IMR-90 (cell line): ENCODE measurements at regions of chr17 and their contacts with region 1.

Region 1: DNA sequence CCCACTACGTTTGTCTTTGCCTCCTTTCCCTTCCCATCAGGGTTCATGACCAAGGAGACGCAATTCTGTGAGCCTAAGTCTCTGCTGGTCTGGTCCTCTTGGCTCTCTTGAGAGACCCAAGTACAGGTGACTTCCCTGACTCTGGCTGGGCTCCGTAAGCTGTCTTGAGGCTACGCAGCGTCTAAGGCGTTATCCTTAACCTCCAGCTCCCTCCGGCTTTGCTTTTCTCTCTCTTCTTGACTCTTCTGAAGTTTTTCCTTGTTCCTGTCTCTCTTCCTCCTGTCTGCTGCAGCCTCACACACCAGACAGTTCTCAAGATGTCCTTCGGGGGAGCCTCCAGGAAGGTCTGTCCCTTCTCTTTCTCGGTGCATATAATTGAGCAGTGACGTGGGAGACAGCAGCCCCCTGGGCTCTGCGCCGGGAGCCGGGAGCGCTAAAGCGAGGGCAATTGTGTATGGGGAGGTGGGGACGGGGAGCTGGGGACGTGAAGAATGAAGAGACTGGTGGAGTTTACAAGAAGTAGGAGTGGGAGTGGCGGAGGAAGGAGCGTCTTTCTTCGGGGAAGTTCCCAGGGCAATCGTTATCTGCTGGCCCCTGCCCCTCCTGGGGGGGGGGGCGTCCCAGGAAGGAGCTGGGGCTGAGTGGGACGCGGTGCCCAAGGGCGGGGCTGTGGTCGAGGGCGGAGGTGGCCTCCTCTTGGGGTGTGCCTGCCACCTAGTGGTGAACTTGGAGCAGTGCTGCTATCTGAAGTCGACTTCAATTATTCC is 6.9 kb upstream of the PIRT start:
- DNase-seq: peak; percentile 53
- ATAC-seq: peak; percentile 99
- H3K4me3 ChIP-seq: peak overlapping the region; percentile 39
- H3K27ac ChIP-seq: no peak overlapping the region
- H3K4me1 ChIP-seq: no peaks in the 10 kb centered on the region
- H3K27me3 ChIP-seq: peaks cover 2% of the 10 kb centered on the region; the same call in 1 of the 2 replicates
- CTCF ChIP-seq: peak; percentile 87
- POLR2A ChIP-seq: no peak
- RAD21 ChIP-seq: peak; percentile 81

Region 2: GRCh38 chr17:10631048-10631700 is 213.6 kb before region 1 on chr17:
- CTCF ChIA-PET with region 1: interaction called, 9 read pairs
- POLR2A ChIA-PET with region 1: no interaction called
- dilution Hi-C with region 1: no loop called
- in situ Hi-C with region 1: no loop called
- intact Hi-C with region 1: loop called (anchors 1 kb)
- DNase-seq: peak; percentile 10
- ATAC-seq: peak; percentile 86
- H3K4me3 ChIP-seq: no peak overlapping the region
- H3K27ac ChIP-seq: no peak overlapping the region
- H3K4me1 ChIP-seq: no peaks in the 10 kb centered on the region
- H3K27me3 ChIP-seq: no peaks in the 10 kb centered on the region
- CTCF ChIP-seq: peak; percentile 77
- POLR2A ChIP-seq: no peak
- RAD21 ChIP-seq: peak; percentile 60

Region 3: DNA sequence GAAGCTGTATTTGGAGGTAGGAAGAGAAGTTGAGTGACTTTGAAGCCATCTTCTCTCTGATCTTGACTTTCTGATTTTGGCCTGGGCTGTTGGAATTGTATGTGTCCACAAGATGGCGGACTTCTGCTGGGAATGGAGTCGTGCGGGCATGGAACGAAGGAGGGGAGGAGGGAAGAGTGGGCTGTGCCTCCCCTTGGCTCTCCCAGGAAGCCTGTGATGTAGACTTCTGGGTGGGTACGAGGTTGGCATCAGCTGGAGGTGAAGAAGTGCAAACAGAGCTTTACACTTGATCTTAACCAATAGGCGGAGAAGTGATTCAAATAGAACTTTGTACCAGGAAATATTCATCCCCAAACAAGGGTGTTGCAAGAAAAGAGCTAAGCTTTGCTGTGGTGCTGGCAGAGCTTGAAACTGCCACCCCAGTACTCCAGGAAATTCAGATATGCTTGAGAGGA is 107.6 kb before region 1 on chr17:
- CTCF ChIA-PET with region 1: interaction called, 16 read pairs
- POLR2A ChIA-PET with region 1: no interaction called
- dilution Hi-C with region 1: no loop called
- in situ Hi-C with region 1: loop called (anchors 5 kb)
- intact Hi-C with region 1: loop called (anchors 1 kb)
- DNase-seq: peak; percentile 55
- ATAC-seq: peak; percentile 98
- H3K4me3 ChIP-seq: no peak overlapping the region
- H3K27ac ChIP-seq: no peak overlapping the region
- H3K4me1 ChIP-seq: no peaks in the 10 kb centered on the region
- H3K27me3 ChIP-seq: peaks cover 10% of the 10 kb centered on the region
- CTCF ChIP-seq: peak; percentile 80
- POLR2A ChIP-seq: no peak
- RAD21 ChIP-seq: peak; percentile 77

Region 4: GRCh38 chr17:11094331-11094730 is 249.5 kb after region 1 on chr17:
- CTCF ChIA-PET with region 1: no interaction called
- POLR2A ChIA-PET with region 1: no interaction called
- dilution Hi-C with region 1: no loop called
- in situ Hi-C with region 1: no loop called
- intact Hi-C with region 1: no loop called
- DNase-seq: no peak
- ATAC-seq: no peak
- H3K4me3 ChIP-seq: no peak overlapping the region
- H3K27ac ChIP-seq: no peak overlapping the region
- H3K4me1 ChIP-seq: no peaks in the 10 kb centered on the region
- H3K27me3 ChIP-seq: no peaks in the 10 kb centered on the region
- CTCF ChIP-seq: no peak
- POLR2A ChIP-seq: no peak
- RAD21 ChIP-seq: no peak